ENCODE measurements at regions of chr1 and their contacts with region 1.

Region 1: GRCh38 chr1:9269078-9269501 is 23.6 kb upstream of the SPSB1 start:
- DNase-seq: no peak
- H3K4me3 ChIP-seq: no peak overlapping the region
- H3K4me3 Mint-ChIP-seq: no peak overlapping the region
- H3K27ac ChIP-seq: no peak overlapping the region
- H3K27ac Mint-ChIP-seq: no peak overlapping the region
- H3K4me1 ChIP-seq: peaks cover 5% of the 10 kb centered on the region
- H3K4me1 Mint-ChIP-seq: peaks cover 0 to 9% (median 3%) of the 10 kb centered on the region in 4 donors
- H3K27me3 ChIP-seq: no peaks in the 10 kb centered on the region
- H3K27me3 Mint-ChIP-seq: no peaks in the 10 kb centered on the region

Region 2: DNA sequence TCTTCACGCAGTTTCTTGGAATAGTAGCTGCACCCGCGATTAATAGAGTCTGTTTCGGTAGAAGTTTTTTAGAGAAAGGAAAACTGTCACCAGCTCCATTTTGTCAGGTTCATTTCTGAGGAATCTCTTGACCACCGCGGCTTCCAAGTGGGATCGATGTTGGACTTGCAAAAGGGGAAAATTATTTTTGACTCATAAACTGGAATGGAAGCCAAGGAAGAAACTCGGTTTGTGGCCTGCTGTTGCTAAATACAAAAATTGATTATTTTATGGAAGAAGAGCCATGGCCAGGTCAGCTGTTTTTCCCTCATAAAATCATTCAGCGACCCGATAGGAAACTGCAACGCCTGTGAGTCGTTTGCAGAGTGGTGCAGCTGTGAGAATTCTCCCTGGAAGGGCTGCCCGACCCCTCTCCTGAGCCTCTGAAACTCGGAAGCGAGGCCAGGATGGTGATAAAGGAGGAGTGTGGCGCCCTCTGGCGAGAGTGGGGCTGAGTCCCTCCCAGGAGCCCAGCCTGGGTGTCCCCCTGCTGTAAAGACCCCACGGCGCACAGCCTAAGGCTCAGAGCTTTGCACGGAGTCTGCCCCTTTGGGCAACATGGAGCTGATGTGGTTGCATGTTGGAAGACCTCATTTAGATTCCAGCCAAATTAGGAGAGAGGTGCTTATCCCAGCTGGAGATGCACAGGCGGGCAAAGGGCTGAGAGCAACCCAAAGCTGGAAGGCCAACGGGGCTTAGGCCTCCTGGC is 186.6 kb after region 1 on chr1:
- CTCF ChIA-PET with region 1: interaction called, 25 read pairs
- POLR2A ChIA-PET with region 1: interaction called, 4 read pairs
- intact Hi-C with region 1: loop called (anchors 1 kb)
- DNase-seq: peak; percentile 42 to 56 (median 49)
- H3K4me3 ChIP-seq: no peak overlapping the region
- H3K4me3 Mint-ChIP-seq: no peak overlapping the region
- H3K27ac ChIP-seq: no peak overlapping the region
- H3K27ac Mint-ChIP-seq: no peak overlapping the region
- H3K4me1 ChIP-seq: no peaks in the 10 kb centered on the region
- H3K4me1 Mint-ChIP-seq: no peaks in the 10 kb centered on the region
- H3K27me3 ChIP-seq: no peaks in the 10 kb centered on the region
- H3K27me3 Mint-ChIP-seq: peaks cover 2 to 3% of the 10 kb centered on the region in 2 donors